BJ (cell line): ENCODE measurements at regions of chr10 and their contacts with region 1.

Region 1: GRCh38 chr10:100433253-100434240 is 29.3 kb upstream of the WNT8B start:
- DNase-seq: peak; percentile 41
- H3K4me3 ChIP-seq: no peak overlapping the region
- H3K27me3 ChIP-seq: no peaks in the 10 kb centered on the region; the same call in 1 of the 2 replicates
- CTCF ChIP-seq: peak; percentile 94

Region 2: GRCh38 chr10:100303724-100304319 is 129.7 kb before region 1 on chr10:
- CTCF ChIA-PET with region 1: interaction called, 16 read pairs
- POLR2A ChIA-PET with region 1: no interaction called
- DNase-seq: no peak
- H3K4me3 ChIP-seq: no peak overlapping the region
- H3K27me3 ChIP-seq: peaks cover 10% of the 10 kb centered on the region
- CTCF ChIP-seq: peak; percentile 76

Region 3: GRCh38 chr10:100319707-100320106 is 113.8 kb before region 1 on chr10:
- CTCF ChIA-PET with region 1: no interaction called
- POLR2A ChIA-PET with region 1: no interaction called
- DNase-seq: no peak
- H3K4me3 ChIP-seq: no peak overlapping the region
- H3K27me3 ChIP-seq: peaks cover 6% of the 10 kb centered on the region
- CTCF ChIP-seq: no peak

Region 4: GRCh38 chr10:100338434-100339036 is 95.0 kb before region 1 on chr10:
- CTCF ChIA-PET with region 1: interaction called, 235 read pairs
- POLR2A ChIA-PET with region 1: no interaction called
- DNase-seq: no peak
- H3K4me3 ChIP-seq: no peak overlapping the region
- H3K27me3 ChIP-seq: peaks cover 8% of the 10 kb centered on the region
- CTCF ChIP-seq: peak; percentile 93

Region 5: GRCh38 chr10:100346765-100347567 is 86.6 kb before region 1 on chr10 and contains the start of gene SCD:
- CTCF ChIA-PET with region 1: interaction called, 235 read pairs
- POLR2A ChIA-PET with region 1: no interaction called
- DNase-seq: peak; percentile 59
- H3K4me3 ChIP-seq: peak within 1 kb of the TSS; percentile 73
- H3K27me3 ChIP-seq: no peaks in the 10 kb centered on the region
- CTCF ChIP-seq: no peak
- polyA plus RNA-seq, gene SCD: 32.1 and 40.8 TPM in 2 replicates

Region 6: GRCh38 chr10:100419911-100420449 is 13.6 kb before region 1 on chr10:
- CTCF ChIA-PET with region 1: interaction called, 12 read pairs
- POLR2A ChIA-PET with region 1: no interaction called
- DNase-seq: no peak
- H3K4me3 ChIP-seq: no peak overlapping the region
- H3K27me3 ChIP-seq: peaks cover 5% of the 10 kb centered on the region
- CTCF ChIP-seq: no peak

Region 7: GRCh38 chr10:100446130-100446761 is 12.7 kb after region 1 on chr10:
- CTCF ChIA-PET with region 1: interaction called, 12 read pairs
- POLR2A ChIA-PET with region 1: interaction called, 3 read pairs
- DNase-seq: no peak
- H3K4me3 ChIP-seq: no peak overlapping the region
- H3K27me3 ChIP-seq: peaks cover 2% of the 10 kb centered on the region
- CTCF ChIP-seq: no peak

Region 8: GRCh38 chr10:100508691-100509150 is 75.2 kb after region 1 on chr10:
- CTCF ChIA-PET with region 1: interaction called, 68 read pairs
- POLR2A ChIA-PET with region 1: no interaction called
- DNase-seq: no peak
- H3K4me3 ChIP-seq: no peak overlapping the region
- H3K27me3 ChIP-seq: no peaks in the 10 kb centered on the region
- CTCF ChIP-seq: peak; percentile 73